ENCODE measurements at regions of chr10 and their contacts with region 1.

Region 1: DNA sequence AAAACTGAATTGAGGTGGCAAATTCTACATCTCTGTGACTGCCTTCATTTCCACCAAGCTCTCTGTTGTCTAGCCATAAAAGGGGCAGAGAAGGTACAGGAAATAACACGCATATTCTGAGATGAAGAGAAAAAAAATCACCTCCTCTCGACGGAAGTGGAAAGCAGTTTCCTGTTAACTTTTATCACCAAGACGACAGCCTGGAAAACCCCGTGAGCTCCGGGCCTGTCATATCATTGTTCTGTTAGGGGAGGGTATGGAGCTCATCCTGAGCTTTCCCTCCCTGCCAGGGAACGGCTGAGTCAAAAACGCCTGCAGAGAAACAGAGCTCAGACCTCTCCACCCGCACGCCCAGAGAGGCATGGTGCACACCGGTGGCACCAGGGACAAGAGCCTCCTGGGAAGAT is 200.3 kb downstream of the PRPF18 start:
- DNase-seq: peak; percentile 89
- ATAC-seq: peak; percentile 80
- H3K4me3 ChIP-seq: peak overlapping the region in 4 of 5 experiments; percentile 16 to 56 (median 40)
- H3K4me3 Mint-ChIP-seq: peak overlapping the region; percentile 83
- H3K27ac ChIP-seq: peak overlapping the region; percentile 90 to 97
- H3K27ac Mint-ChIP-seq: peak overlapping the region; percentile 92
- H3K4me1 ChIP-seq: peaks cover 37 to 46% of the 10 kb centered on the region in 2 donors
- H3K4me1 Mint-ChIP-seq: peaks cover 49% of the 10 kb centered on the region
- H3K27me3 ChIP-seq: no peaks in the 10 kb centered on the region
- H3K27me3 Mint-ChIP-seq: no peaks in the 10 kb centered on the region
- CTCF ChIP-seq: no peak

Region 2: DNA sequence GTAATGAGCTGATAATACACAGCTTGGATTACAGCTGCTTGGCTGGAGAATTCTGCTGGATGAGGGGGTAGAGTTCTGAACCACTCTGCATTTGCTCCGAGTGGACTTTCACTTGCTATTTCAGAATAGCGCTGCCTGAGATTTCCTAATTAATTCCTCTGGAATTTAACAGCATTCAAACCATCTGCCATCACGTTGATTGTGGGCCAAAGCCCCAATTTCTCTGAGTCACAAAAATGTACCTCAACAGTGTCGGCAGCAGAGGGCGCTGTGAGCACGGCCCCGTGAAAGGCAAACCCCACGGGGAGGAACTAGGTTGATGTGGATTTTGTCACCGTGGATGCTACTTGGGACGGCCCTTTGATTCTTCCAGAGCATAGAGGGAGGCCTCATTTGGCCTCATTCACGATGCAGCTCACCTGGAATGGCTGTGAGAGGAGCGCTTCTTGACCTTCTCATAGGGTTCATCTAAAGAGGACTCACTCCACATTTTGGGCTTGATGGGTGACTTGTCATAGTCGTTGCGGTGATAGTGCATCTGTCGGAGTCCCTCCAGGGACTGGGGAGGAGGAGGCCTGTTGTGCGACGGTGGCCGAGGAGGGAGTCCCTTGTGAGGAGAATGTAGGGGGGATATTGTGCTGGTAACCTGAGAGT is 127.0 kb before region 1 on chr10:
- CTCF ChIA-PET with region 1: interaction called, 14 read pairs
- POLR2A ChIA-PET with region 1: no interaction called
- intact Hi-C with region 1: no loop called
- DNase-seq: peak; percentile 75
- ATAC-seq: peak; percentile 67
- H3K4me3 ChIP-seq: no peak overlapping the region
- H3K4me3 Mint-ChIP-seq: no peak overlapping the region
- H3K27ac ChIP-seq: no peak overlapping the region
- H3K27ac Mint-ChIP-seq: peak overlapping the region; percentile 26
- H3K4me1 ChIP-seq: peaks cover 7 to 16% of the 10 kb centered on the region in 2 donors
- H3K4me1 Mint-ChIP-seq: peaks cover 9% of the 10 kb centered on the region
- H3K27me3 ChIP-seq: peaks cover 0 to 7% (median 0%) of the 10 kb centered on the region in 4 experiments
- H3K27me3 Mint-ChIP-seq: no peaks in the 10 kb centered on the region
- CTCF ChIP-seq: peak; percentile 89

Region 3: GRCh38 chr10:13831711-13832141 is 44.7 kb after region 1 on chr10:
- CTCF ChIA-PET with region 1: no interaction called
- POLR2A ChIA-PET with region 1: no interaction called
- intact Hi-C with region 1: loop called (anchors 2 kb)
- DNase-seq: peak; percentile 65
- ATAC-seq: peak; percentile 88
- H3K4me3 ChIP-seq: peak overlapping the region in 1 of 5 experiments; percentile 20
- H3K4me3 Mint-ChIP-seq: peak overlapping the region; percentile 71
- H3K27ac ChIP-seq: peak overlapping the region; percentile 55 to 57
- H3K27ac Mint-ChIP-seq: peak overlapping the region; percentile 87
- H3K4me1 ChIP-seq: peaks cover 14 to 16% of the 10 kb centered on the region in 2 donors
- H3K4me1 Mint-ChIP-seq: peaks cover 24% of the 10 kb centered on the region
- H3K27me3 ChIP-seq: no peaks in the 10 kb centered on the region
- H3K27me3 Mint-ChIP-seq: no peaks in the 10 kb centered on the region
- CTCF ChIP-seq: no peak

Region 4: GRCh38 chr10:13924040-13924725 is 137.2 kb after region 1 on chr10:
- CTCF ChIA-PET with region 1: no interaction called
- POLR2A ChIA-PET with region 1: no interaction called
- intact Hi-C with region 1: loop called (anchors 5 kb)
- DNase-seq: no peak
- ATAC-seq: no peak
- H3K4me3 ChIP-seq: no peak overlapping the region
- H3K4me3 Mint-ChIP-seq: no peak overlapping the region
- H3K27ac ChIP-seq: no peak overlapping the region
- H3K27ac Mint-ChIP-seq: peak overlapping the region; percentile 3
- H3K4me1 ChIP-seq: peaks cover 15 to 17% of the 10 kb centered on the region in 2 donors
- H3K4me1 Mint-ChIP-seq: peaks cover 32% of the 10 kb centered on the region
- H3K27me3 ChIP-seq: no peaks in the 10 kb centered on the region
- H3K27me3 Mint-ChIP-seq: peaks cover 5% of the 10 kb centered on the region
- CTCF ChIP-seq: no peak

Region 5: DNA sequence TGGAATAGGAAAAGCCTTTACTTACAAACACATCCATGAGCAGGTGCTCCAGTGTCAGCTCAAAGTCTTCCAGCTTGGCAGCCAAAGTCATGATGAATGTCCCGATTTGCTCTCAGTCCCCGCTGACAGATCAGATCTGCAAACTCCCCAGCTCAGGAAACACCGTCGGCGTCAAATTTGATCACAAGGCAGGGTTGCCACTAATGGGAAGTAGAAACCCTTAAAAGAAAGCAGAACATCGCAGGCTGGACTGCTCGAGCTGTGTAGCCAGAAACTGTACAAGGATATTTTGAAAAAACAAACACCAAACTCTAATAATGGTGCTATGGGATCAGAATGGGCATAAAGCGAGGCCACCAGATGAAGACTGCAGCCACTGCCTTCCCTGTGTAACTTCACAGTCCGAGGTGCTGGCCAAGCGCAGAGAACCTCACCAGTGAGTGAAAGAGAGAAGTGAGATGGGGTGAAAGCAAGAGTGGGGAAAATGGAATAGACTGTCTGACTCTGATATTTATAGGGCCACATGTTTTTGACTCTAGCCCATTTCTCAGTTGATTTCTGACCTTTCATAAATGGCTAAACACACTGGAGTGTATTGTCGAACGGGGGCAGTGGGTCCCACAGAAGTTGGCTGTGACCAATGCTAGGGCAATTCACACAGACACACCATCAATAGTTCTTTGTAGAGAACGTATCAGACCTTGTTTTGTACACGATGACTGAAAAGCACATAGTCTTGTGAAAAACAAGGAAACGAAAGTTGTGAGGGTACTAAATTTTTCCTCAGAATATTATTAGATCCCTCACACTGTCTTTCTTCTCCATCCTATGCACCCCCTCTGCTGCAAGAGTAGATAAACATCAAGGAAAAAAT is 237.5 kb after region 1 on chr10:
- CTCF ChIA-PET with region 1: interaction called, 3 read pairs
- POLR2A ChIA-PET with region 1: no interaction called
- intact Hi-C with region 1: loop called (anchors 10 kb)
- DNase-seq: peak; percentile 47
- ATAC-seq: peak; percentile 41
- H3K4me3 ChIP-seq: peak overlapping the region in 3 of 5 experiments; percentile 32 to 55 (median 51)
- H3K4me3 Mint-ChIP-seq: peak overlapping the region; percentile 88
- H3K27ac ChIP-seq: peak overlapping the region in 1 of 2 donors; percentile 32
- H3K27ac Mint-ChIP-seq: peak overlapping the region; percentile 90
- H3K4me1 ChIP-seq: peaks cover 6 to 25% of the 10 kb centered on the region in 2 donors
- H3K4me1 Mint-ChIP-seq: peaks cover 42% of the 10 kb centered on the region
- H3K27me3 ChIP-seq: peaks cover 0 to 18% (median 2%) of the 10 kb centered on the region in 4 experiments
- H3K27me3 Mint-ChIP-seq: peaks cover 34% of the 10 kb centered on the region
- CTCF ChIP-seq: no peak

Region 6: GRCh38 chr10:14185316-14186045 is 398.5 kb after region 1 on chr10:
- CTCF ChIA-PET with region 1: interaction called, 15 read pairs
- POLR2A ChIA-PET with region 1: interaction called, 5 read pairs
- intact Hi-C with region 1: loop called (anchors 1 kb)
- DNase-seq: peak; percentile 89
- ATAC-seq: peak; percentile 79
- H3K4me3 ChIP-seq: peak overlapping the region in 4 of 5 experiments; percentile 27 to 59 (median 45)
- H3K4me3 Mint-ChIP-seq: peak overlapping the region; percentile 79
- H3K27ac ChIP-seq: peak overlapping the region; percentile 93 to 98
- H3K27ac Mint-ChIP-seq: peak overlapping the region; percentile 92
- H3K4me1 ChIP-seq: peaks cover 33 to 52% of the 10 kb centered on the region in 2 donors
- H3K4me1 Mint-ChIP-seq: peaks cover 38% of the 10 kb centered on the region
- H3K27me3 ChIP-seq: peaks cover 0 to 22% (median 14%) of the 10 kb centered on the region in 4 experiments
- H3K27me3 Mint-ChIP-seq: peaks cover 18% of the 10 kb centered on the region
- CTCF ChIP-seq: no peak

Measured in B cell (primary cell).